ENCODE measurements at regions of chr17 and their contacts with region 1.

Region 1: GRCh38 chr17:27367121-27367991 is 73.4 kb downstream of the WSB1 start:
- DNase-seq: no peak
- H3K4me3 ChIP-seq: no peak overlapping the region
- H3K27ac ChIP-seq: no peak overlapping the region
- H3K4me1 ChIP-seq: no peaks in the 10 kb centered on the region
- CTCF ChIP-seq: no peak

Region 2: DNA sequence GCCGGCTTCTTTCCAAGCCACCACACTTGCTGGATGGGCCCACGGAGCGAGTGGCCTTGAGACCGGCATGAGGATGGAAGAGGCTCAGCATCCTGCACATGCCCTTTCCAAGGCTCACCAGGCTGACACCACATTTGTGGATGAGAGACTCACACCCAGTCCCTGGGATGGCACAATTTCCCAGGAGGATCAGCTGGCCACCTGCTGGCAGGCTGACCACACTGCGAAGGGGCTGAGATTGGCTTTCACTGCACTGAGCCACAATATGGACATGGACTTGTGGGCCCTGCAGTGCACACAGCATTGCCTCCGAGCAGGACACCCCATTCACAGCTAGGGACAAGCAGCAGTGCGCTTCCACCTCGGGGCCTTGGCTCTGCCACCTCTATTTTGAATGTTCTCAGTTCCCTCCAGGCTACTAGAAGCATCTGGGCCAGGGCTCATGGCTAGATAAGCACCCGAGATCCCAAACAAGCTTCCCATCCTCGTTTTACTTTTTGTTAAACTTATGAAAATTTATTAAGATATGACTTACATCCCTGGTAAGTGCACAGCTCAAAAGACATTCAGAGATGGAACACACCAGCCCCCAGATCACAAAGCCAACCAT is 63.6 kb after region 1 on chr17:
- CTCF ChIA-PET with region 1: no interaction called
- POLR2A ChIA-PET with region 1: interaction called, 3 read pairs
- intact Hi-C with region 1: loop called (anchors 10 kb)
- DNase-seq: peak; percentile 11
- H3K4me3 ChIP-seq: no peak overlapping the region
- H3K27ac ChIP-seq: no peak overlapping the region
- H3K4me1 ChIP-seq: no peaks in the 10 kb centered on the region
- CTCF ChIP-seq: peak; percentile 53